Upper lobe of right lung (tissue), 1 donor: ENCODE measurements at regions of chr17 and their contacts with region 1.

Region 1: GRCh38 chr17:47229535-47230443 is 20.6 kb downstream of the MYL4 start:
- DNase-seq: peak; percentile 83
- ATAC-seq: peak; percentile 96
- H3K4me3 ChIP-seq: no peak overlapping the region
- H3K27ac ChIP-seq: no peak overlapping the region
- H3K4me1 ChIP-seq: peaks cover 18% of the 10 kb centered on the region
- H3K27me3 ChIP-seq: no peaks in the 10 kb centered on the region
- CTCF ChIP-seq: peak; percentile 97

Region 2: GRCh38 chr17:47315451-47316266 is 85.9 kb after region 1 on chr17:
- intact Hi-C with region 1: loop called (anchors 10 kb)
- DNase-seq: no peak
- ATAC-seq: peak; percentile 94
- H3K4me3 ChIP-seq: no peak overlapping the region
- H3K27ac ChIP-seq: no peak overlapping the region
- H3K4me1 ChIP-seq: peaks cover 12% of the 10 kb centered on the region
- H3K27me3 ChIP-seq: no peaks in the 10 kb centered on the region
- CTCF ChIP-seq: peak; percentile 88